ENCODE measurements at regions of chr1 and their contacts with region 1.

Region 1: DNA sequence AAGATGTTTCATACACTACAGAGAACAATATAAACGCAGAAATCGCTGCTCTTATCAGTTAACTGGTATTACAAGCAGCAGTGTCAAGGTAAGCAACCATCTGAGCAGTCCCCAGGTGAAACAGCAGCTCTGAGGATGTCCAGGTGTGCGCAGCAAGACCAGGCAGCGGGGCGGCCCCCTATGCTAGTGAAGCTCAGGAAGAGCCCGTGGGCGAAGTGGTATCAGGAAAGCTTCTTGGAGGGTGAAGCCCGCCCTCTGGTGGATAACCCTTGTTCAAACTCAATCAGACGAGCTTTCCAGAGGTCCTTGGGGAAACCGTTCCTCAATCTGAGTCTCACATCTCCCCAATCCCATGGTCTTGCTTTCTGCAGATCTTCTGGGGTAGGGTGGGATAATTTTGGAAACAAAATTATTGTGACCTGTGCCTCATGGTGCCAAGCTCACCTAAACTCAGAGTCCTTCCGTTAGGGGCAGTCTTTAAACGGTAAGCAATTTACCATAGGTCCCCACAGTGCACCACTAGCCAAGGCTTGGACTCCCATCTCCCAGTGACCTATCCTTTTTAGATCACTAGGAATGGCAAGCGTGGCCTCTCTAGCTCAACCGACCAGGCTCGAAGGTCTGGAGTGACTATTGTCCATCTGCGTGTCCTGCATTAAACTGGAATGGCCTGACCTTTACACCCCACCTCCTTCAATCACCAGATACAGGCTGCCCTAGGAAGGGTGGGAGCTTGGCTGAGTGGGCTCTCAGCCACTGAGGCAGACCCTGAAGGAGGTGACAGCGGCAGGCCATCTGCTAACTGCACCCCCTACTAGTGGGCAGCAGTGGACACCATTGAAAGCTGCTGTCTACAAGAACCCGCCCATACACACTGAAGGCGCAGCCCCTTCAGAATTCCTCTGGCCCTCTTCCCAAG is 13.6 kb upstream of the FAM110D start:
- DNase-seq: peak; percentile 81
- CTCF ChIP-seq: peak; percentile 74

Region 2: GRCh38 chr1:26009796-26010460 is 135.4 kb before region 1 on chr1:
- CTCF ChIA-PET with region 1: no interaction called
- POLR2A ChIA-PET with region 1: no interaction called
- DNase-seq: no peak
- CTCF ChIP-seq: no peak

Region 3: DNA sequence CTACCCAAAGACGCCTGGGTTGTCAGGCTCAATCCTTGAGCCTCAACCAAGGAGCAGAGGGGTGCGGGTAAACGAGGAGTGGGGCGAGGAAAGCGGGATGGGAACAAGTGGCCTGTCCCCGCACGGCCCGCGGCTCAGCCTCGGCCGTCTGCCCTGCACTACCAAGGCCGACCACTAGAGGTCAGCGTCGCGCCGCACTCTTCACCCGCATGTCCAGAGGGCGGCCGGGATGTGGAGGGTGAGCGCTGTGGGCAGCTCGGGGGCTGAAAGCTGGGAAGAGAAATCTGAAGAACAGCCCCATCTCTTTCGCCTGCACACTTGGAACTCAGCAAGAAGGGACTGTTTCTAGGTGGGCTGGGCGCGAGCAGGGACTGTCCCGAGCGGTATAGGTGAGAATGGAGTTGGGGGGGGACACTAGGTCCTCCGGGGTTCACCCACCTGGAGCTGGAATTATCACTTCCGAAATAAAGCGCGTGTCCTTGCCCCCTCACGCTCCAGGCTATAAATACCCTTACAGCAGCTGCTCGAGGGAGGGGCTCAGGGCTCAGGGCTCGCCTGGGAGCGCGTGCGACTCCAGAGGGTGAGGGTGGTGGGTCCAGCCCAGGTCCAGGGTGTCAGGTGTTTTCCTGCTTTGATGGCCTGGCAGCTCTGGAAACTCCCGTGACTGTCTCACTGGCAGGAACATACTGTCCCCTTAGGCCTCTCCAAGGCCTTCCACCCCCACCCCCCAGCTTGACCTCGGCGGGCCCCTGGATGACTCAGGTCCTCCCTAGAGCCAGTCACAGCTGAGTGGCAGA is 109.1 kb before region 1 on chr1:
- CTCF ChIA-PET with region 1: interaction called, 31 read pairs
- POLR2A ChIA-PET with region 1: no interaction called
- DNase-seq: peak; percentile 92
- CTCF ChIP-seq: peak; percentile 99

Region 4: GRCh38 chr1:26102526-26102925 is 42.8 kb before region 1 on chr1:
- CTCF ChIA-PET with region 1: interaction called, 151 read pairs
- POLR2A ChIA-PET with region 1: no interaction called
- DNase-seq: no peak
- CTCF ChIP-seq: no peak

Region 5: GRCh38 chr1:26126321-26127084 is 18.8 kb before region 1 on chr1:
- CTCF ChIA-PET with region 1: interaction called, 93 read pairs
- POLR2A ChIA-PET with region 1: no interaction called
- DNase-seq: peak; percentile 74
- CTCF ChIP-seq: no peak

Region 6: GRCh38 chr1:26169669-26170471 is 24.6 kb after region 1 on chr1 and contains the start of gene ZNF593:
- CTCF ChIA-PET with region 1: interaction called, 14 read pairs
- POLR2A ChIA-PET with region 1: no interaction called
- DNase-seq: peak; percentile 100
- CTCF ChIP-seq: peak; percentile 95